ENCODE measurements at regions of chr13 and their contacts with region 1.

Region 1: GRCh38 chr13:98576963-98577822 is at the start of gene STK24:
- DNase-seq: peak; percentile 61 to 91 (median 80)
- ATAC-seq: peak; percentile 76 to 85 (median 82)
- H3K4me3 ChIP-seq: peak within 1 kb of the TSS; percentile 78 to 96 (median 82)
- H3K27ac ChIP-seq: peak within 1 kb of the TSS; percentile 84 to 96 (median 90)
- H3K4me1 ChIP-seq: peaks cover 0 to 32% (median 9%) of the 10 kb centered on the region in 3 donors
- H3K27me3 ChIP-seq: no peaks in the 10 kb centered on the region
- CTCF ChIP-seq: no peak
- total RNA-seq, gene STK24: 28.4 to 55.7 (median 39.1) TPM

Region 2: DNA sequence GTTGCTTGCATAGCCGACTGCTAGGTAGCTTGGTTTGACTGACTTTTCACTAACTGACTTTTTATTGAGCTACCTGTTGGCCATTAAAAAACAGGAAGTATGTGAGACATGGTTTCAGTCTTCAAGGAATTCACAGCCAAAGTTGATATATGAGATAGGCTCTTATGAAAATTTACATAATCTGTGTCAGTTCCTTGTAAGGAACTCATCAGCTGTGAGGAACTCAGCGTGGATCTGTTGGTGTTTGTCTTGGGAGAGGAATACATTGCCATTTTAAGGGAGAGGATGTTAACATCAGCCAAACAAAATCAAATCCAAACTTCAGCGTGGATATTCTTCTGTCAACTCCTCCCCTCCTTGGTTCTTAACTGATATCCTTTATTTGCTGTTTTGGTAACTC is 402.1 kb before region 1 on chr13:
- intact Hi-C with region 1: no loop called
- DNase-seq: no peak
- ATAC-seq: no peak
- H3K4me3 ChIP-seq: no peak overlapping the region
- H3K27ac ChIP-seq: peak overlapping the region in 3 of 4 donors; percentile 47 to 77 (median 67)
- H3K4me1 ChIP-seq: peaks cover 20 to 37% (median 31%) of the 10 kb centered on the region in 3 donors
- H3K27me3 ChIP-seq: no peaks in the 10 kb centered on the region
- CTCF ChIP-seq: no peak

Region 3: GRCh38 chr13:98411681-98412201 is 165.5 kb before region 1 on chr13:
- intact Hi-C with region 1: no loop called
- DNase-seq: peak in 1 of 6 donors; percentile 48
- ATAC-seq: peak in 2 of 4 donors; percentile 17 to 20
- H3K4me3 ChIP-seq: peak overlapping the region in 1 of 4 donors; percentile 22
- H3K27ac ChIP-seq: peak overlapping the region in 2 of 4 donors; percentile 35 to 57
- H3K4me1 ChIP-seq: peaks cover 11 to 25% (median 17%) of the 10 kb centered on the region in 3 donors
- H3K27me3 ChIP-seq: no peaks in the 10 kb centered on the region
- CTCF ChIP-seq: no peak

Region 4: DNA sequence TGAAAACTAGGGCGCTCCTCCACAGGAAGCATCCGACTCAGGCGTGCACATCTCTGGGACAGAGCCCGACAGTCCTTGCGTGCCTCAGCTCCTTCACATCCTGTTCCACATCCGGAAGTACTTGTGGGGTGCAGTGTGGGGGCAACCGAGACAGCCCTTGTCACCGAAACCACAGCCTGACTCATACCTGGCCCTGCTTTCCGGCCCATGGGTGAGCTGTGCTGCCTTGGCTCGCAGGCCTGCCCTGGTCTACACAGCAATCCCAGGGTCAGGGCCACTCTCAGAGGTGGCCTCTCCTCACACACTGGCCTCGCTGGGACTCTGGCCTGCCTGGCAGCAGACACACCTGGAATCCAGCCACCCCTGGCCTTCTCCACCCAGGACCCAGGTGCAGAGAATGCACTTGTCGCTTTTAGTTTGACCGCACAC is 100.6 kb before region 1 on chr13:
- intact Hi-C with region 1: loop called in 2 of 3 experiments (anchors 10 kb)
- DNase-seq: peak in 5 of 6 donors; percentile 39 to 79 (median 49)
- ATAC-seq: peak; percentile 42 to 80 (median 60)
- H3K4me3 ChIP-seq: no peak overlapping the region
- H3K27ac ChIP-seq: peak overlapping the region; percentile 18 to 67 (median 44)
- H3K4me1 ChIP-seq: peaks cover 8 to 32% (median 29%) of the 10 kb centered on the region in 3 donors
- H3K27me3 ChIP-seq: no peaks in the 10 kb centered on the region
- CTCF ChIP-seq: no peak

Region 5: DNA sequence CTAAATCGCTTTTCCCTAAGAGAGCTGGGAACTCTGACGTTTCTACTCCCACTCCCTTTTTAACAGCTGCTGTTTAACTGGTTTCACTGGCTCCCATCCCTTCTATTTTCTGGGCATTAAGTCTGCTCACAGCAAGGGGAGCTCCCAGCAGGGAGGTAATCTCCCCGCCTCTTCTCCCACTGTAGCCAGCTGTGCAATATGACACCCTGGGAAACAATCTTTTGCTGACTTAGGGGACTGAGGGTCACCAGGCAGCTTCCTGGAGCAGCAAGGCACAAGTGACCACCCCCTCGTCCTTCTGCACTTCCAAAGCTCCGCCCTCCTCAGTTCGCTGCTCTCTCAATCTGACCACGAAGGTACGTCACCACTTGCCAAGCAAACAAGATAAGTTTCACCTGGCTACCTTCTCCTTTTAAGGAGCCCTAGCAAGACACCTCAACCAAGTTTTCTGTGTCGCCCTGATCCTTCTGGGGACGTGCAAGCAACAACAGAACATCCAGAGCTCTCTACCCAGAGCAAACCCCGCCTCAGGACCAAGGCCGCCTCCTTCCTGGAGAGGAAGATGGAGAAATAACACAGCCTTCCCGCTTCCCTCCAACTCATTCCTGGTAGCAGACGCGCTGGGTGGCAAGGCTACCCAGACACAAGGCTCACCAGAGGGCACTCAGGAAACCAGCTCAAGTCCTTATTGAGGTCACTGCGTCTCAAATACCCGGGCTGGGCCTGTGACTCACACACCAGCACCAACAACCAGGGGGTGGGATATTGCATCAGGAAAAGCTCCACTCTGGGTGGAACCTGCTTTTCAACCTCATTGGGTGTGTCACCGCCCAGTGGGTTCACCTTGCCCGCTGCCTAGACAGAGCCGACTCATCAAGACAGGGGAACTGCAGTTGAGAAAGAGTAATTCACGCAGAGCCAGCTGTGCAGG is 92.6 kb before region 1 on chr13:
- intact Hi-C with region 1: loop called in 2 of 3 experiments (anchors 10 kb)
- DNase-seq: peak; percentile 74 to 93 (median 87)
- ATAC-seq: peak; percentile 84 to 87 (median 86)
- H3K4me3 ChIP-seq: peak overlapping the region in 2 of 4 donors; percentile 6
- H3K27ac ChIP-seq: peak overlapping the region; percentile 81 to 99 (median 96)
- H3K4me1 ChIP-seq: peaks cover 33 to 51% (median 49%) of the 10 kb centered on the region in 3 donors
- H3K27me3 ChIP-seq: no peaks in the 10 kb centered on the region
- CTCF ChIP-seq: no peak

Region 6: DNA sequence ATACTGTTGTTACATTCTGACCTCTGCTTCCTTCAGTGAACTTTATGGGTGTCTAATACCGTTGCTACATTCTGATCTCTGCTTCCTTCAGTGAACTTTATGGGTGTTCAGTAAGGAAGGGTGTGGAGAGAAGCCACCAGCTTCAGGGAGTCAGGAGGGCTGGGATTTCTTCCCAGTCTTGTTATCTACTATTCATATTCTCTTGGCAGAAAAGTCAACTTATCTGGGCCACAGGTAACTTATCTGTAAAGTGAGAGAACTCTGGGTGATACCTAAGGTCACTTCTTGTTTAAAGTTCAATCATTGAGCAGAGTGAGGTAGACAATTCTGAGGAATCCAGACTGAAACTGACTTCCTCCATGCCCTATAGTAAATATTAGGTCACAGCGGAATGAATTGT is 70.9 kb after region 1 on chr13:
- intact Hi-C with region 1: loop called in 1 of 3 experiments (anchors 10 kb)
- DNase-seq: no peak
- ATAC-seq: peak; percentile 71 to 83 (median 78)
- H3K4me3 ChIP-seq: no peak overlapping the region
- H3K27ac ChIP-seq: peak overlapping the region in 2 of 4 donors; percentile 7 to 57
- H3K4me1 ChIP-seq: peaks cover 0 to 24% (median 8%) of the 10 kb centered on the region in 3 donors
- H3K27me3 ChIP-seq: no peaks in the 10 kb centered on the region
- CTCF ChIP-seq: no peak

Measured in pancreas (tissue), 10 donors.